ENCODE measurements at regions of chr4 and their contacts with region 1.

Region 1: GRCh38 chr4:112099701-112100297 is 45.5 kb upstream of the FAM241A start:
- DNase-seq: peak in 3 of 14 experiments; percentile 60 to 66 (median 62)
- ATAC-seq: peak; percentile 74
- H3K4me3 ChIP-seq: no peak overlapping the region
- H3K4me3 Mint-ChIP-seq: no peak overlapping the region
- H3K27ac ChIP-seq: no peak overlapping the region
- H3K27ac Mint-ChIP-seq: no peak overlapping the region
- H3K4me1 ChIP-seq: no peaks in the 10 kb centered on the region
- H3K4me1 Mint-ChIP-seq: no peaks in the 10 kb centered on the region
- H3K27me3 ChIP-seq: no peaks in the 10 kb centered on the region
- H3K27me3 Mint-ChIP-seq: peaks cover 9% of the 10 kb centered on the region
- CTCF ChIP-seq: peak; percentile 78

Region 2: DNA sequence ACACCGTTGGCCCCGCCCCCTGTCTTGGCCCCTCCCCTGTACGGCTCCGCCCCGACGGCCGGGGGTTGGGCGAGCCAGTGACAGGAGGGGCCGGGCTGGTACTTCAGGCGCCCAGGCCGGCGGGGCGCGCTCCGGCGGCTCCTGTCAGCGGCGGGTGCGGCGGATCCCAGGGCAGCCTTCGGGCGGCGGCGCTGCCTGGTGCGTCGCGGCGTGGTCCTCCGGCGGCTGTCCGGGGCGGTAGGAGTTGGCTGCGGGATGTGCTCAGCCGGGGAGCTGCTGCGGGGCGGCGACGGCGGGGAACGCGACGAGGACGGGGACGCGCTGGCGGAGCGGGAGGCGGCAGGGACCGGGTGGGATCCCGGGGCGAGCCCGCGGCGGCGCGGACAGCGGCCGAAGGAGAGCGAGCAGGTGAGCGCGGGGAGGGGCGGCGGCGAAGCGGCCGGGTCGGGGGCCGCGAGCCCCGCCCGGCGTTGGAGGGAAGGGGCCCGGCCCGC is 45.6 kb after region 1 on chr4 and contains the start of gene FAM241A:
- CTCF ChIA-PET with region 1: no interaction called
- POLR2A ChIA-PET with region 1: no interaction called
- intact Hi-C with region 1: loop called in 1 of 2 experiments (anchors 5 kb)
- DNase-seq: peak; percentile 79 to 93 (median 90)
- ATAC-seq: peak; percentile 94
- H3K4me3 ChIP-seq: peak within 1 kb of the TSS; percentile 70
- H3K4me3 Mint-ChIP-seq: peak within 1 kb of the TSS; percentile 93
- H3K27ac ChIP-seq: peak within 1 kb of the TSS; percentile 27 to 73
- H3K27ac Mint-ChIP-seq: peak within 1 kb of the TSS; percentile 85
- H3K4me1 ChIP-seq: peaks cover 6% of the 10 kb centered on the region
- H3K4me1 Mint-ChIP-seq: peaks cover 35% of the 10 kb centered on the region
- H3K27me3 ChIP-seq: no peaks in the 10 kb centered on the region
- H3K27me3 Mint-ChIP-seq: no peaks in the 10 kb centered on the region
- CTCF ChIP-seq: no peak
- total RNA-seq, gene FAM241A: 0.74 to 1.1 TPM

Region 3: GRCh38 chr4:112231779-112232713 is 132.2 kb after region 1 on chr4 and contains the start of gene AP1AR:
- CTCF ChIA-PET with region 1: interaction called, 22 read pairs
- POLR2A ChIA-PET with region 1: interaction called, 9 read pairs
- intact Hi-C with region 1: loop called (anchors 1 kb)
- DNase-seq: peak; percentile 53 to 90 (median 69)
- ATAC-seq: peak; percentile 50
- H3K4me3 ChIP-seq: peak within 1 kb of the TSS; percentile 93
- H3K4me3 Mint-ChIP-seq: peak within 1 kb of the TSS; percentile 99
- H3K27ac ChIP-seq: peak within 1 kb of the TSS; percentile 93 to 96
- H3K27ac Mint-ChIP-seq: peak within 1 kb of the TSS; percentile 98
- H3K4me1 ChIP-seq: peaks cover 13% of the 10 kb centered on the region
- H3K4me1 Mint-ChIP-seq: peaks cover 55% of the 10 kb centered on the region
- H3K27me3 ChIP-seq: no peaks in the 10 kb centered on the region
- H3K27me3 Mint-ChIP-seq: no peaks in the 10 kb centered on the region
- CTCF ChIP-seq: no peak
- total RNA-seq, gene AP1AR: 3.7 to 4.8 TPM

Region 4: DNA sequence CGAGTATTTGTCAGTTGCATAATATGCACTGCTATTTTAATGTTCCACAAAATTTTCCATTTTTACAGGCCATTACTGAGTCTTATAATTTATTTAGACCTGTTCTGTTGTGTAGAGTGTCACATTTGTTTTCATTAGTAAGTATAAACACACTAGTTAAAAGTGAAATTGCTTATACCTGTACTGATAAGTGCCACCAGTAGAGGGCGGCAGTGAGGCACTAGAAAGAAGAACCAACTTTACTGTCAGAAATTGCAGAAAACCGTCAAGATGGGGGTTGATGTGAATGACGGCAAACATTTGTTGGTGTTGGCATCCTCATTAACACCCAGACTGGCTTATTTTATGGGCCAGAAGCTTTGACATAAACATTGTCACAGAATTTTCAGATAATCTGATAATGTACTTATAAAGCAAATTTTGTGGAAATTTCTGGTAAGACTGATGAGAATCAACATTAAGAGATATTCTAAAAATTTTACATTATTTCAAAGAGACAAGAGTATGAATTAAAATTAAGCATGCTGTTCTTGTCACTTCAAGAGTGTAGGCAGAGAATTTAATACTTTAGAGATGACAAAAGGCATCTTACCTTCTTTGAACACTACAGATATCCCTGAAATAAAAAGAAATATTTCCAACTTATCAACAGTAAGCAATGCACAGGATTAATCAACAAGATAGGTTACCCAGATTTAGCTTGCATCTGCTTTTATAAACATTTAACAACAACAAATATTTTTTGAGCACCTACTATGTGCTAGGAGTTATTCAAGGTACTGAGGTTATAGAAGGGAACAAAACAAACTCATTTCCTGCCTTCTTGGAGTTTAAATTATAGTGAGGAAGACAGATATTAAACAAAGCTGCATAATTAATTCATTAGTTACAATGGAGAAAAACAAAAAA is 222.2 kb after region 1 on chr4:
- CTCF ChIA-PET with region 1: no interaction called
- POLR2A ChIA-PET with region 1: no interaction called
- intact Hi-C with region 1: loop called (anchors 1 to 5 kb)
- DNase-seq: peak; percentile 60 to 89 (median 76)
- ATAC-seq: peak; percentile 99
- H3K4me3 ChIP-seq: no peak overlapping the region
- H3K4me3 Mint-ChIP-seq: peak overlapping the region; percentile 58
- H3K27ac ChIP-seq: no peak overlapping the region
- H3K27ac Mint-ChIP-seq: no peak overlapping the region
- H3K4me1 ChIP-seq: no peaks in the 10 kb centered on the region
- H3K4me1 Mint-ChIP-seq: peaks cover 14% of the 10 kb centered on the region
- H3K27me3 ChIP-seq: no peaks in the 10 kb centered on the region
- H3K27me3 Mint-ChIP-seq: no peaks in the 10 kb centered on the region
- CTCF ChIP-seq: peak; percentile 98

Region 5: GRCh38 chr4:112523764-112524505 is 424.1 kb after region 1 on chr4:
- CTCF ChIA-PET with region 1: no interaction called
- POLR2A ChIA-PET with region 1: no interaction called
- intact Hi-C with region 1: loop called (anchors 1 to 2 kb)
- DNase-seq: peak; percentile 49 to 83 (median 70)
- ATAC-seq: peak; percentile 82
- H3K4me3 ChIP-seq: peak overlapping the region; percentile 51
- H3K4me3 Mint-ChIP-seq: peak overlapping the region; percentile 89
- H3K27ac ChIP-seq: no peak overlapping the region
- H3K27ac Mint-ChIP-seq: no peak overlapping the region
- H3K4me1 ChIP-seq: peaks cover 35% of the 10 kb centered on the region
- H3K4me1 Mint-ChIP-seq: peaks cover 51% of the 10 kb centered on the region
- H3K27me3 ChIP-seq: peaks cover 50 to 51% of the 10 kb centered on the region in 2 experiments
- H3K27me3 Mint-ChIP-seq: peaks cover 78% of the 10 kb centered on the region
- CTCF ChIP-seq: peak; percentile 74

Region 6: GRCh38 chr4:112604589-112604988 is 504.8 kb after region 1 on chr4:
- CTCF ChIA-PET with region 1: interaction called, 4 read pairs
- POLR2A ChIA-PET with region 1: no interaction called
- intact Hi-C with region 1: loop called (anchors 1 to 2 kb)
- DNase-seq: peak in 12 of 14 experiments; percentile 4 to 65 (median 12)
- ATAC-seq: peak; percentile 63
- H3K4me3 ChIP-seq: no peak overlapping the region
- H3K4me3 Mint-ChIP-seq: no peak overlapping the region
- H3K27ac ChIP-seq: no peak overlapping the region
- H3K27ac Mint-ChIP-seq: no peak overlapping the region
- H3K4me1 ChIP-seq: no peaks in the 10 kb centered on the region
- H3K4me1 Mint-ChIP-seq: peaks cover 4% of the 10 kb centered on the region
- H3K27me3 ChIP-seq: no peaks in the 10 kb centered on the region
- H3K27me3 Mint-ChIP-seq: no peaks in the 10 kb centered on the region
- CTCF ChIP-seq: peak; percentile 66

Region 7: DNA sequence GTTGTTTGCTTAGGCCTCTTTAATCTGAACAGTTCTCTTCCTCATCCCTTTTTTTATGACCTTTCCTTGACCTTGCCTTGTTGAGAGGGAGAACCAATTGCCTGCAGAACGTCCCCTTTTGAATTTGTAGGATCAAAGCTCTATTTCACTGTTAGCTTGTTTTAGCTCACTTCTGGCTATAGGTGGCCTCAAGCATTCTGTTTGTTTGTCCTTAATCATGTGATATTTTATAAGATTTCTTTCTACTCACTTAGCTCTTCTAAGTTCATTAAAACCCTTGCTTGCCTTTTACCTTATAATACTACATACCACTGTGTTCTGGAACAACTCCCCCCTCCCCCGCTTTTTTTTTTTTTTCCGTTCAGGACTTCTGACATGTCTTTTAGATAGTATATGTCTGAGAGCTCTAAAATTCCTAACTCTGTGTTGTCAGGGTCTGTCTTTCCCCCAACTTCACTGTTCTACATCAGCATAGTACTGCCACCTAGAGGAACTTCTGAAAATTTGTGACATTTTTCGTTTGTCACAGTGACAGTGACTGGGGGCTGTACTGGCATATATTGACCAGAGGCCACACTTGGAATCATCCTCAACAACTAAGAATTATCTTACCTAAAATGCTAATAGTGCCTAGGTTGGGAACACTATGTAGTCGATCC is 665.6 kb after region 1 on chr4:
- CTCF ChIA-PET with region 1: no interaction called
- POLR2A ChIA-PET with region 1: no interaction called
- intact Hi-C with region 1: loop called in 1 of 2 experiments (anchors 10 kb)
- DNase-seq: peak in 3 of 14 experiments; percentile 3 to 22 (median 11)
- ATAC-seq: no peak
- H3K4me3 ChIP-seq: no peak overlapping the region
- H3K4me3 Mint-ChIP-seq: no peak overlapping the region
- H3K27ac ChIP-seq: no peak overlapping the region
- H3K27ac Mint-ChIP-seq: no peak overlapping the region
- H3K4me1 ChIP-seq: no peaks in the 10 kb centered on the region
- H3K4me1 Mint-ChIP-seq: no peaks in the 10 kb centered on the region
- H3K27me3 ChIP-seq: no peaks in the 10 kb centered on the region
- H3K27me3 Mint-ChIP-seq: peaks cover 14% of the 10 kb centered on the region
- CTCF ChIP-seq: peak; percentile 29